B cell (primary cell): ENCODE measurements at regions of chr2 and their contacts with region 1.

Region 1: GRCh38 chr2:69565431-69565839 is 78.1 kb downstream of the AAK1 start:
- DNase-seq: peak; percentile 74
- ATAC-seq: peak; percentile 79
- H3K4me3 ChIP-seq: no peak overlapping the region
- H3K4me3 Mint-ChIP-seq: no peak overlapping the region
- H3K27ac ChIP-seq: no peak overlapping the region
- H3K27ac Mint-ChIP-seq: no peak overlapping the region
- H3K4me1 ChIP-seq: peaks cover 0 to 3% of the 10 kb centered on the region in 2 donors
- H3K4me1 Mint-ChIP-seq: no peaks in the 10 kb centered on the region
- H3K27me3 ChIP-seq: peaks cover 0 to 6% (median 4%) of the 10 kb centered on the region in 4 experiments
- H3K27me3 Mint-ChIP-seq: peaks cover 20% of the 10 kb centered on the region
- CTCF ChIP-seq: peak; percentile 84

Region 2: DNA sequence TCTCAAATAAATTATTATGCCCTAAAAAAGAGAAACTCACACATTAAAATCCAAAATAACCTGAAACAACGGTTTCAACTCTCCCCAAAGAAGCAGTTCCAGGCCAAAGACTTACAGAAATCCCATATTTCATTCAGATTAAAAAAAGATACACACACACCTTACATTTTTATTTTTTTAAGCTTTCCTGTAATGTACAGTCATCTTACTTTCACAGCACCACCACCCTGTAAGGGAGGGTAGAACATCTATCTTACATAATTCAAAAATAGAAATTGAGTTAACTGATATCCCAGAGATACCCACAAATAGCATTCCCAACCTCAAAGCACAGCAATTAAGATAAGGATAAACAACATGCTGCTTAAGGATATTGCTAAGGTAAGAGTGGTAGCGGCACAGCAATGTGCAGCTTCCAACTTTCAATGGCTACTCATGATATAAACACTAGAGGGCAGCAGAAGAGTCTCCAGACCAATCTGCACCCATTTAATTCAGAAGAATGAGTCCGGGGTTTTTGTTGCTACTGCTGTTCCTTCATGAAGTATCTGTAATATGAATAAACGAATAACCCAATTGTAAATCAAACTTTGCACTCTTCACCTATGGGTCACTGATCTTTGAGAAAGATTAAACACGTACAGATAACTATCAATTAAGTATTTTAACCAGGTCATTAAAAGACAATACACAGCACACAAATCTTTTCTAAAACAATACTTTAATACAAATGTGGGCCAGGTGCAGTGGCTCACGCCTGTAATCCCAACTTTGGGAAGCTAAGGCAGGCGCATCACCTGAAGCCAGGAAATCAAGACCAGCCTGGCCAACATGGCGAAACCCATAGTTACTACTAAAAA is 189.7 kb before region 1 on chr2:
- CTCF ChIA-PET with region 1: interaction called, 14 read pairs
- POLR2A ChIA-PET with region 1: no interaction called
- intact Hi-C with region 1: loop called (anchors 10 kb)
- DNase-seq: peak; percentile 38
- ATAC-seq: no peak
- H3K4me3 ChIP-seq: no peak overlapping the region
- H3K4me3 Mint-ChIP-seq: no peak overlapping the region
- H3K27ac ChIP-seq: no peak overlapping the region
- H3K27ac Mint-ChIP-seq: no peak overlapping the region
- H3K4me1 ChIP-seq: no peaks in the 10 kb centered on the region
- H3K4me1 Mint-ChIP-seq: peaks cover 15% of the 10 kb centered on the region
- H3K27me3 ChIP-seq: no peaks in the 10 kb centered on the region
- H3K27me3 Mint-ChIP-seq: no peaks in the 10 kb centered on the region
- CTCF ChIP-seq: peak; percentile 62

Region 3: DNA sequence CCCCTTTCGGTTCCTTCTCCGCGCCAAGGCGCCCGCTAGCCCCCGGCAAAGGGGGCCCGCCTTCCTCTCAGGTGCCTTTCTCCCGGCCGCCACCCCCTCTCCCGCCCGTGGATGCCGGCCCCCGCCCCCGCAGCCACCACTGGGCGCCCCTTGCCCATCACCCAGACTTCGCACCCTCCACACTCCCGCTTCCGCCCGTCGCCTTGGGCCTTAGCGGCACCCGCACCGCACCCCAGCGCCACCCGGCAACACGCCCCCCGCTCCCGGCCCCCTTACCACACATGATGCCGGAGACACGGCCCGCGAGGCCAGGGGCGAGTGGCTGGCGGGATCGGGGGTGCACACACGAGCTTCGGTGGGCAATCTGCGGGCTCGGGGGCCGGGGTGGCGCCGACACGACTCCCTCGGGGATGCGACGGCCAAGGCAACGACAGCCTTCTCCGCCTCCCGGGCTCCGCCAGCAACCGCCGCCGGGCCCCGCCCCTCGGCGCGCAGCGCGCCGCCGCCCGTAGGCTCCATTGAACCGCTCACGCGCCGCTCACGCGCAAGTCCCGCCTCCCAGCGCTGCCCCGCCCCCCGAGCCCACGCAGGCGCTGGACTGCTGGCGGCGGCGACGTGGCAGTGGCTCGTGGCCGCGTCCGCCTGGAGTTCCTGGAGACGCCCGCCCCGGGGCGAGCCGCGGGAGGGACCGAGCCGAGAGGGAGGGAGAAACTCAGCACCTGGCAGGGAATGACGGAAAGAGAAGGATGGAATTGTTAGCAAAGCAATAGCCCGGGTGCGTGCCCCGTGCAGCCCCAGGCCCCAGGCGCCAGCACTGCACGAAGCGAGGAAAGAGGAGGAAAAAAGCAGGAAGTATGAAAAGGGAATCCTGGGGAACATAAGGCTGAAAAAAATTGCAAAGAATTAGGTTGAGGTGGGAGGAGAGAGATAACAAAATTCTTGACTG is 178.4 kb before region 1 on chr2 and contains the start of gene GFPT1:
- CTCF ChIA-PET with region 1: no interaction called
- POLR2A ChIA-PET with region 1: no interaction called
- intact Hi-C with region 1: loop called (anchors 10 kb)
- DNase-seq: peak; percentile 94
- ATAC-seq: peak; percentile 97
- H3K4me3 ChIP-seq: peak within 1 kb of the TSS; percentile 52 to 90 (median 82)
- H3K4me3 Mint-ChIP-seq: peak within 1 kb of the TSS; percentile 90
- H3K27ac ChIP-seq: peak within 1 kb of the TSS; percentile 62 to 70
- H3K27ac Mint-ChIP-seq: peak within 1 kb of the TSS; percentile 85
- H3K4me1 ChIP-seq: peaks cover 15 to 16% of the 10 kb centered on the region in 2 donors
- H3K4me1 Mint-ChIP-seq: peaks cover 30% of the 10 kb centered on the region
- H3K27me3 ChIP-seq: no peaks in the 10 kb centered on the region
- H3K27me3 Mint-ChIP-seq: no peaks in the 10 kb centered on the region
- CTCF ChIP-seq: no peak
- total RNA-seq, gene GFPT1: 15.0 and 18.1 TPM in 2 replicates

Region 4: DNA sequence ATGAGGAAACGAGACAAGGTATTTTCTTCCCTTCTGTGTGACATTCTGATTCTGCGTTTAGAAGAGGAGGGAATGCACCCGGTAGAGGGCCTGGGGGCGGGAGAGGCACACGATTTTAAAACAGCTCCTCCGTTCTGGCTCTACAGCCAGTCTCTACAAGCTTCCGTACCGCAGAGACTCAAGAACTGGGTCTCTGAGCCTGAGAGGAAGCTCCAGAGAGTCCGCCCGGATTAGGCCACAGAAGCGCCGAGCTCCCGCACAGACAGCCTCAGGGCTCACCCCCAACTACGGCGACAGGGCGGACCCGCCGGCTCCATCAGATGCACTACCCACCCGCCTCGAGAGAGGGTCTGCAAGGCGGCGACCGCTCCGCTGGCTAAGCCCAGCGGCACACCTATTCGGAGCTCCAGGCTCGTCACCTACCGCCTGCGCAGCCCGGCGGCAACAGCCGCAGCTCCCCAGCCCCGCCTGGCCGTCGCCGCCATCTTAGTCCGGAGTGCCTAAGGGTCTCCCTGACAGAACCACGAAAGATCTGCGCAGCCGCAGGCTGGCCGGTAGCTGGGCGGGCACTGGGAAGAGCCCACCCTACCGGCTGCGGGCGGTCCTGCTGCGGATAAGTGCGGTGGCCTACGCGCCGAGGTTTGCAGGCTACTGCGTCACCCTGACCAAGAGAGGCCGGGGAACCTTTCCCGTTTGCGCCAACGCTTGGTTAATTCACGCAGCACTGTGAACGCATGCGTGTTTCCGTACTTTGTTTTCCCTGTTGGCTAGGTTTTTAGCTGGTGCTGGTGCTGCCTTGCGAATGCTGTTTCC is 128.3 kb before region 1 on chr2 and contains the start of gene NFU1:
- CTCF ChIA-PET with region 1: interaction called, 25 read pairs
- POLR2A ChIA-PET with region 1: interaction called, 3 read pairs
- intact Hi-C with region 1: loop called (anchors 2 kb)
- DNase-seq: peak; percentile 94
- ATAC-seq: peak; percentile 94
- H3K4me3 ChIP-seq: peak within 1 kb of the TSS; percentile 67 to 92 (median 78)
- H3K4me3 Mint-ChIP-seq: peak within 1 kb of the TSS; percentile 97
- H3K27ac ChIP-seq: peak within 1 kb of the TSS; percentile 91 to 93
- H3K27ac Mint-ChIP-seq: peak within 1 kb of the TSS; percentile 99
- H3K4me1 ChIP-seq: peaks cover 27 to 33% of the 10 kb centered on the region in 2 donors
- H3K4me1 Mint-ChIP-seq: peaks cover 41% of the 10 kb centered on the region
- H3K27me3 ChIP-seq: no peaks in the 10 kb centered on the region
- H3K27me3 Mint-ChIP-seq: no peaks in the 10 kb centered on the region
- CTCF ChIP-seq: peak; percentile 74
- total RNA-seq, gene NFU1: 33.8 and 40.6 TPM in 2 replicates

Region 5: DNA sequence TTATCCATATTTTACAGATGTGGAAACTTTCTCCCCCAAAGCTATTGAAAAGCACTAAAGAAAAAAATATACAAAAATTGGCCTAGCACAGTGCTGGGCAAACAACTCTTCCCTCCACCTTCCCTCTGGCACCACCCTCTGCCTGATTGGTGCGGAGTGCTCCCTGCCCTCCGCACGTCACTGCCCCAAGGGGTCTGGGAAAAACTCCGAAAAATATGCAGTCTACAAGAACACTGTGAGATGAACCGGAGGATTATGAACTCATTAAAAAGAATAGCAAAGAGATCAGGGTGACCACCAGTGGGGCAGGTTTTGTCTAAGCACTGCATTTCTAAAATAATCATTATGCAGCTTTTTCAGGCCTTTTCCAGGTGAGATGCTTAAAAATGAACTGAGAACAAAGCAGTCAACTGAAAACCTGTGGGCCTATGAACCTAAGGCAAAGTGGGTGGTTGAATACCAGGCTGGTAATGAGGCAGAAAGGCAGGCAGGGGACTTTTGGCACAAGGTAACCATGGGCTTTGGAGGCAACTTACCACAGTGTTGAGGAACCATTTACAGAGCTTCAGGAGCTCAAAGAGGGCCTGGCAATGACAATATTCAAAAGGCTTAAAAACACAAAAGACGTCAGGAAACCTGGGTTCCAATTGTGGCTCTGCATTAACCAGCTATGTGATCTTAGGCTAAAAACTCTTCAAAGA is 20.6 kb after region 1 on chr2:
- CTCF ChIA-PET with region 1: interaction called, 12 read pairs
- POLR2A ChIA-PET with region 1: no interaction called
- intact Hi-C with region 1: no loop called
- DNase-seq: no peak
- ATAC-seq: no peak
- H3K4me3 ChIP-seq: no peak overlapping the region
- H3K4me3 Mint-ChIP-seq: no peak overlapping the region
- H3K27ac ChIP-seq: no peak overlapping the region
- H3K27ac Mint-ChIP-seq: no peak overlapping the region
- H3K4me1 ChIP-seq: peaks cover 10 to 13% of the 10 kb centered on the region in 2 donors
- H3K4me1 Mint-ChIP-seq: peaks cover 8% of the 10 kb centered on the region
- H3K27me3 ChIP-seq: peaks cover 0 to 5% (median 0%) of the 10 kb centered on the region in 4 experiments
- H3K27me3 Mint-ChIP-seq: peaks cover 3% of the 10 kb centered on the region
- CTCF ChIP-seq: no peak

Region 6: DNA sequence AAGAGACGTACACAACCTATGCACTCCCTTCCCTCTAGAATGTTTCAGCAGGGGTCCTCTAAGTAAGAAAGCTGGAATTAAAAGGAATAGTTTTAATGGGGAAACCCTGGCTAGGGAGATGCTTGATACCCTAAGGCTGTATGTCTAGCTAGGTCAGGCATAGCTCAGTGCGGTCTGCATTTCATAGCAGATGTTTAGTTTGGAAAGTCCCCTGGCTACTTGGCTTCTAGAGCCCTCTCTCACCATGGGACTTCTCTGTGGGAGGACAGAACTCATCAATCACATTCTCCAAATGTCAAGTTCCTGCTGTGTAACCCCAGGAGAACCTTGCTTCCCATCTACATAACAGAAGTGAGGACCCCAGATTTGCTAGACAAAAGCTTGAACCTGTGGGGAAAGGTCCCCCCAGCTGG is 152.4 kb after region 1 on chr2:
- CTCF ChIA-PET with region 1: interaction called, 28 read pairs
- POLR2A ChIA-PET with region 1: interaction called, 3 read pairs
- intact Hi-C with region 1: no loop called
- DNase-seq: no peak
- ATAC-seq: no peak
- H3K4me3 ChIP-seq: no peak overlapping the region
- H3K4me3 Mint-ChIP-seq: no peak overlapping the region
- H3K27ac ChIP-seq: no peak overlapping the region
- H3K27ac Mint-ChIP-seq: no peak overlapping the region
- H3K4me1 ChIP-seq: peaks cover 0 to 6% of the 10 kb centered on the region in 2 donors
- H3K4me1 Mint-ChIP-seq: peaks cover 2% of the 10 kb centered on the region
- H3K27me3 ChIP-seq: peaks cover 0 to 39% (median 11%) of the 10 kb centered on the region in 4 experiments
- H3K27me3 Mint-ChIP-seq: peaks cover 42% of the 10 kb centered on the region
- CTCF ChIP-seq: no peak